ENCODE measurements at regions of chr9 and their contacts with region 1.

Region 1: GRCh38 chr9:32378993-32379729 is 5.3 kb upstream of the ACO1 start:
- DNase-seq: peak; percentile 37
- H3K4me3 Mint-ChIP-seq: peak overlapping the region; percentile 31
- H3K27ac Mint-ChIP-seq: no peak overlapping the region
- H3K4me1 Mint-ChIP-seq: peaks cover 14% of the 10 kb centered on the region
- H3K27me3 Mint-ChIP-seq: peaks cover 5% of the 10 kb centered on the region

Region 2: GRCh38 chr9:32300373-32300772 is 78.8 kb before region 1 on chr9:
- CTCF ChIA-PET with region 1: no interaction called
- POLR2A ChIA-PET with region 1: no interaction called
- intact Hi-C with region 1: no loop called
- DNase-seq: no peak
- H3K4me3 Mint-ChIP-seq: no peak overlapping the region
- H3K27ac Mint-ChIP-seq: no peak overlapping the region
- H3K4me1 Mint-ChIP-seq: no peaks in the 10 kb centered on the region
- H3K27me3 Mint-ChIP-seq: peaks cover 21% of the 10 kb centered on the region

Region 3: DNA sequence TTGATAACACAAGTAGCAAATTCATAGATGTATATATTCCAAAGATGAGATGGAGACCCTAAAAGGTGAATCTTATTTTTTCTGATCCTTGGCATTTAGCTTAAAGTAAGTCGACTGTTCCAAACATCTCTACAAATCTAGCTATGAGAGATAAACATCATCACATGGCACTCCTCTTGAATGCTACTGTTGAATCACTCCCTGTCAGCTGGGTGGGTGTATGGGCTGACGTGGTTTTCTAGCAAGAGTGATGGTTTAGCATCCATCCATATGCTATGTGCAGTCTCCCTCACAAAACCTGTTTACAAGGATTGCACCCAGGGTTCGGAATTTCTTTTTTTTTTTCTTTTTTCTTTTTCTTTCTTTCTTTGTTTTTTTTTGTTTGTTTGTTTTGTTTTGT is 19.0 kb after region 1 on chr9:
- CTCF ChIA-PET with region 1: interaction called, 26 read pairs
- POLR2A ChIA-PET with region 1: no interaction called
- intact Hi-C with region 1: no loop called
- DNase-seq: no peak
- H3K4me3 Mint-ChIP-seq: no peak overlapping the region
- H3K27ac Mint-ChIP-seq: no peak overlapping the region
- H3K4me1 Mint-ChIP-seq: no peaks in the 10 kb centered on the region
- H3K27me3 Mint-ChIP-seq: no peaks in the 10 kb centered on the region

Region 4: DNA sequence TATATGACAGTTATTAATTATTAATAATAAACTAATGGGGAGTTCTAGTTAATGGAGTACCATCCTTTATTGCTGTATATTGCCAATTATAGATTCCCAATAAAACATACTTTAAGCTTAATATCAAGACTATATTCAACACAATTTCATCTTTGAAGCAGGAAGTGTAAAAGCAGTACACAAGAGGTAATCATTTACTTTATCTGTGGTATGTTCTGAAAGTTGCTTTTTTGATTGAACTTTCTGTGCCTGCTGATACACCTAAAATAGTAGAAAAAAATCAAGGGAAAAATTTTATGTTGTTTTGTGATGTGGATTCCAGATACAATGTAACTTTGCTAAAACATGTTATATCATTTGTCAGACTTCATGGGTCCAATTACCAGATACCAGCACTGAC is 63.3 kb after region 1 on chr9:
- CTCF ChIA-PET with region 1: interaction called, 10 read pairs
- POLR2A ChIA-PET with region 1: no interaction called
- intact Hi-C with region 1: no loop called
- DNase-seq: no peak
- H3K4me3 Mint-ChIP-seq: no peak overlapping the region
- H3K27ac Mint-ChIP-seq: no peak overlapping the region
- H3K4me1 Mint-ChIP-seq: no peaks in the 10 kb centered on the region
- H3K27me3 Mint-ChIP-seq: no peaks in the 10 kb centered on the region

Region 5: GRCh38 chr9:32550562-32551433 is 171.6 kb after region 1 on chr9:
- CTCF ChIA-PET with region 1: interaction called, 17 read pairs
- POLR2A ChIA-PET with region 1: interaction called, 8 read pairs
- intact Hi-C with region 1: loop called (anchors 1 kb)
- DNase-seq: peak; percentile 95
- H3K4me3 Mint-ChIP-seq: peak overlapping the region; percentile 99
- H3K27ac Mint-ChIP-seq: peak overlapping the region; percentile 100
- H3K4me1 Mint-ChIP-seq: peaks cover 48% of the 10 kb centered on the region
- H3K27me3 Mint-ChIP-seq: no peaks in the 10 kb centered on the region

Region 6: DNA sequence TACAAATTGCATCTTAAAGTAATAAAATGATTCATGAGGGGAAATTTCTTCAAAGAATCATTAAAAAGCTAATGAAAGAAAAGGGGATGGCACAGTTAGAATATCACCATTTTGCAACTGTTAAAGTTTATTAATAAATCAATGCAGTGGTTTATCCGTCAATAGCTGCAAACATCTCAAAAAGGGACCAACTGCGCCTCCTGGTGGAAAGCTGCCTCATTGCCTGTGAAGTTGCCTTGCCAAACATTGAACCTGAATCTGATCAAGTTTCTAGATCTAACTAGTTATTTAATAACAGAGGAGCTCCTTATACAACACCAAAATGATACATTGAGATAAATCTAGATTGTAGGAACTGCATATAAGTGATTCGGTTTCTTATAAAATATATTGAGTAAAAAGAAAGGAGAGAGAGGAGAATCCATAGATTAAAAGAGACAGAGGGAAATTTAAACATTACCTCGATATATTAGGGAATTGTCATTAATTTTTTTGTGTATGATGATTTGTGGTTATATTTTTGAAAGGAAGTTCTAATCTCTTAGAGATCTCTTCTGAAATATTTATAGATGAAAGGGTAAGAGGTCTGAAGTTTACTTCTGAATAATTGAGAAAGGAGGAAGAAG is 200.7 kb after region 1 on chr9:
- CTCF ChIA-PET with region 1: interaction called, 502 read pairs
- POLR2A ChIA-PET with region 1: interaction called, 6 read pairs
- intact Hi-C with region 1: loop called (anchors 1 kb)
- DNase-seq: peak; percentile 84
- H3K4me3 Mint-ChIP-seq: no peak overlapping the region
- H3K27ac Mint-ChIP-seq: no peak overlapping the region
- H3K4me1 Mint-ChIP-seq: no peaks in the 10 kb centered on the region
- H3K27me3 Mint-ChIP-seq: peaks cover 14% of the 10 kb centered on the region

Region 7: DNA sequence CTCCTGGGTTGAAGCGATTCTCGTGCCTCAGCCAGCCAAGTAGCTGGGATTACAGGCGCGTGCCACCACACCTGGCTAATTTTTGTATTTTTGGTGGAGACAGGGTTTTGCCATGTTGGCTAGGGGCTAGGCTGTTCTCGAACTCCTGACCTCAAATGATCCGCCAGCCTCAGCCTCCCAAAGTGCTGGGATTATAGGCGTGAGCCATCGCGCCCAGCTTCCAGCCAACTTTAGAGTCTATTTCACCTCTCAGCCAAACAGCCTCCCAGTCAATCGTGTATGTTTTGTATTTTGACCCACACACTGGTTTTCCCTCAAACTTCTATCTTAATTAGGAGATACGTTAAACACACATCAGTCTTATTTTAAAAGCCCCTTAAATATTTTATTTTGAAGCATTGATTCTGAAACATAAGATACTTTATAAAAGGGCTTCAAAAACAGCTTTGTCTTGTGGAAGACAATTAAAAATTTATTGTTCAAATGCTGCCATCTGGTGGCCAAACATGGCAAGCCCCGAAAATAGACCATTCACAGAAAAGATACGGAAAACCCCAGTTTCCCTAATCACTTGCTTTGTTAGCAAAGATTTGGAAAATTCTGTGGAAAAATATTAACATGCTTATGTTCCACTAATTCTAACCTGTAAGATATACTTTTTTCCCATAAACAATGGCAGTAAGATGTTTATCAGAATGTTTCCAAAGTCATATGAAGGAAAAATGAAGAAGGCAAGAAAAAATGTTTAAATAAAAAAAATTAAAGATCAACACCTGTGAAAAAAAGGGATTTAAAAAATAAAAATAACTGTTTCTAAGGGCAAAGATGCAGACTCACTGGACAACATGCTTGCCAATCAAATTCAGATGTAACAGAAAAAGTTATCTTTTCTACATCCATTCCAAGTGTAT is 589.2 kb after region 1 on chr9:
- CTCF ChIA-PET with region 1: interaction called, 52 read pairs
- POLR2A ChIA-PET with region 1: no interaction called
- intact Hi-C with region 1: loop called (anchors 1 kb)
- DNase-seq: peak; percentile 63
- H3K4me3 Mint-ChIP-seq: no peak overlapping the region
- H3K27ac Mint-ChIP-seq: no peak overlapping the region
- H3K4me1 Mint-ChIP-seq: peaks cover 2% of the 10 kb centered on the region
- H3K27me3 Mint-ChIP-seq: no peaks in the 10 kb centered on the region

Measured in activated CD4-positive, alpha-beta memory T cell treated with anti-CD3 and anti-CD28 coated beads for 36 hours (primary cell).